CD8-positive, alpha-beta T cell (primary cell): ENCODE measurements at regions of chr5 and their contacts with region 1.

Region 1: GRCh38 chr5:148725677-148726076 is 71.3 kb upstream of the HTR4 start:
- DNase-seq: no peak
- ATAC-seq: no peak
- H3K4me3 ChIP-seq: no peak overlapping the region
- H3K4me3 Mint-ChIP-seq: no peak overlapping the region
- H3K27ac ChIP-seq: no peak overlapping the region
- H3K27ac Mint-ChIP-seq: no peak overlapping the region
- H3K4me1 ChIP-seq: no peaks in the 10 kb centered on the region
- H3K4me1 Mint-ChIP-seq: no peaks in the 10 kb centered on the region
- H3K27me3 ChIP-seq: no peaks in the 10 kb centered on the region
- H3K27me3 Mint-ChIP-seq: peaks cover 12% of the 10 kb centered on the region
- CTCF ChIP-seq: no peak

Region 2: DNA sequence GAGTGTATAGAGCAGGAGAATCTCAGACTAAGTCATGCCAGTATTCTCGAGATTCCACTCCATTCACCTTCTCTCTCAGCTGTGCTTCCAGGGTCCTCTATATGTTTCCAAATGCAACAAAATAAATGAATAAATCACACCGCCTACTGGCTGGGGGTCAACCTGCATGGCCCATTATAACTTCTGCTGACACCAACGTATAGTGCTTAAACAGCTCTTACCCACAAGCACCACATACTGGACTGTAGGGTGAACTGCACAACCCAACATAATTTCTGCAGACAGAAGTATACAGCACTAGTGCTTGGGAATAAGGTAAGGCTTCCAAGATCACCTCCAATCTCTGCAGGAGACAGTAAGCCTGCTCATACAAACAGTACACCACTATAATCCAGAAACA is 38.2 kb before region 1 on chr5:
- CTCF ChIA-PET with region 1: no interaction called
- POLR2A ChIA-PET with region 1: no interaction called
- intact Hi-C with region 1: no loop called
- DNase-seq: peak in 2 of 9 experiments; percentile 1 to 2
- ATAC-seq: no peak
- H3K4me3 ChIP-seq: no peak overlapping the region
- H3K4me3 Mint-ChIP-seq: no peak overlapping the region
- H3K27ac ChIP-seq: no peak overlapping the region
- H3K27ac Mint-ChIP-seq: no peak overlapping the region
- H3K4me1 ChIP-seq: no peaks in the 10 kb centered on the region
- H3K4me1 Mint-ChIP-seq: no peaks in the 10 kb centered on the region
- H3K27me3 ChIP-seq: no peaks in the 10 kb centered on the region
- H3K27me3 Mint-ChIP-seq: peaks cover 15% of the 10 kb centered on the region
- CTCF ChIP-seq: no peak

Region 3: DNA sequence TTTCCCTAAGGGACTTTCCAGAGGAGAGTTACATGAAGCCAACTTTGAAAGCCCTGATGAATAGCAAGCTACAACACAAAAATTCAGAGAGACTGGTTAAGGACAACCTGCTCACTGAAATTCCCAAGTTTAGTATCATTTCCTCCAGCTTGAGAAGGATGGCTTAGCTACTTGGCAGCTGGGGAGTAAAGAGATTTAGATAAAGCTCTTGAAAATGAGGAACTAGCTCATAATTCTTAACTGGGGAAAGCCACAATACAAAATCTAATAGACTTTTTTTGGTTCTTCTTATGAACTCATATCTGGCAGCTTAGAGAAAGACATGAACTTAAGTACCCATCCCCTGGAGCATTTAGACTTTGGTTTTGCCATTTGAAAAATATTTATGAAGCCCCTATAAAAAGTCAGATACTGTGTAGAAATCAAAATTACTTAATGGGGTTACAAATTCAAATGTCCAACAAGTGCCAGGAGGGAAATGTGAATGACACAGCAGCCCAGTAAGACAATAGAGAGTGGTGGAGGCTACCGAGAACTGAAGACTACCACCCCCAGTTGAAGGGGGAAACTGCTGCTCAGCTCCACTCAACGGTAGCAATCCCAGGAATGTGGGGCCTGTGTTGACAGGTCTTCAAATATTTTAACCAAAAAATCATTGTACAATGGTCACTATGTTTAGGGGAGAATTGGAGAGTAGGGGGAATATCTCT is 21.3 kb after region 1 on chr5:
- CTCF ChIA-PET with region 1: interaction called, 77 read pairs
- POLR2A ChIA-PET with region 1: no interaction called
- intact Hi-C with region 1: loop called in 1 of 2 experiments (anchors 1 kb)
- DNase-seq: no peak
- ATAC-seq: no peak
- H3K4me3 ChIP-seq: no peak overlapping the region
- H3K4me3 Mint-ChIP-seq: no peak overlapping the region
- H3K27ac ChIP-seq: no peak overlapping the region
- H3K27ac Mint-ChIP-seq: no peak overlapping the region
- H3K4me1 ChIP-seq: no peaks in the 10 kb centered on the region
- H3K4me1 Mint-ChIP-seq: no peaks in the 10 kb centered on the region
- H3K27me3 ChIP-seq: no peaks in the 10 kb centered on the region
- H3K27me3 Mint-ChIP-seq: peaks cover 5% of the 10 kb centered on the region
- CTCF ChIP-seq: no peak